ENCODE measurements at regions of chr4 and their contacts with region 1.

Region 1: DNA sequence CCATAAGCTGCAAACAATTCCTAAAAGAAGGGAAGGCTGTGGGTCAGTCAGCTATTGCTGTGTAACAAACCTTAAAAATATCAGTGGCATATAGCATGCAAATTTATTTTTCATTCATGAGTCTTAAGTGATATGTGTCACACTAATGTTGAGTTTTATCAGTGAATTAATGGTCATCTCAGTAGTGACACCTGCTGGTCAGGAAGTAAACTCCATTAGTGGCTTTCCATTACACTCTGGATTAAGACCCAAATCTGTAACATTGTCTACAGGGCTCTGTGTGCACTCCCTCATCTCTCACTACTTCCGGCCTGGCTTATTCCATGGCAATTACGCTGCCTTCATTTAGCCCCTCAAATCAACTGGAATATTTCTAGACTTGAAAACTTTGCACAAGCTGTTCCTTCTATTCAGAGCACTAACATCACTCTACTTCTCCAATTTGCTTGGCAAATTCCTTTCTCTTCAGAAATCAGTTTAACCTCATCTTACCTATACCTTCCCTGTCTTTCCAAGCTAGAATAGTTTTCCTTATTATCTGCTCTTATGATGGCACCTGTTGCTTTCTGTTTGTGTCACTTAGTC is 217.3 kb upstream of the TAPT1 start:
- DNase-seq: peak; percentile 47
- H3K4me3 ChIP-seq: no peak overlapping the region
- H3K27ac ChIP-seq: no peak overlapping the region
- H3K4me1 ChIP-seq: no peaks in the 10 kb centered on the region
- H3K27me3 ChIP-seq: peaks cover 9 to 10% of the 10 kb centered on the region in 2 experiments
- CTCF ChIP-seq: peak; percentile 56 to 63
- POLR2A ChIP-seq: no peak

Region 2: GRCh38 chr4:16289897-16290554 is 153.6 kb before region 1 on chr4:
- CTCF ChIA-PET with region 1: interaction called, 39 read pairs
- POLR2A ChIA-PET with region 1: no interaction called
- dilution Hi-C with region 1: no loop called
- intact Hi-C with region 1: loop called (anchors 1 kb)
- DNase-seq: peak; percentile 69
- H3K4me3 ChIP-seq: no peak overlapping the region
- H3K27ac ChIP-seq: no peak overlapping the region
- H3K4me1 ChIP-seq: no peaks in the 10 kb centered on the region
- H3K27me3 ChIP-seq: peaks cover 12 to 18% of the 10 kb centered on the region in 2 experiments
- CTCF ChIP-seq: peak; percentile 27 to 41
- POLR2A ChIP-seq: no peak

Region 3: DNA sequence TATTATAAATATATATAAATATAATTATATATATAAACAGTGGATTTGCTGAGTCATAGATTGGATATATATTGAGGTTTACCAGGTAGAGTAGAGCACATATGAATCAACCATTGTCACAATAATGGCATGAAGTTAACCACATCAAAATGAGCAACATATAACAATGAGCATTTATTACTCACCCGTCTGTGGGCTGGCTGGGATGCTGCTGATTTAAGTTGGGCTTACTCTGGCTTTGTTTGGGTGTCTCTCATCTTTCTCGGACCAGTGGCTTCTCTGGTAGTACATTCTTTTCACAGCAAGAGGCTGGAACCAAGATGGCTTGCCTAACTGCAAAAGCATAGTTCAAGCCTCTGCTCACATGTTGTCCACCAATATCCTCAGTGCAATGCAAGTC is 105.7 kb before region 1 on chr4:
- CTCF ChIA-PET with region 1: no interaction called
- POLR2A ChIA-PET with region 1: no interaction called
- dilution Hi-C with region 1: no loop called
- intact Hi-C with region 1: loop called (anchors 2 kb)
- DNase-seq: no peak
- H3K4me3 ChIP-seq: no peak overlapping the region
- H3K27ac ChIP-seq: no peak overlapping the region
- H3K4me1 ChIP-seq: no peaks in the 10 kb centered on the region
- H3K27me3 ChIP-seq: no peaks in the 10 kb centered on the region
- CTCF ChIP-seq: no peak
- POLR2A ChIP-seq: no peak

Region 4: GRCh38 chr4:16496501-16496900 is 52.9 kb after region 1 on chr4:
- CTCF ChIA-PET with region 1: no interaction called
- POLR2A ChIA-PET with region 1: no interaction called
- dilution Hi-C with region 1: no loop called
- intact Hi-C with region 1: no loop called
- DNase-seq: peak; percentile 54
- H3K4me3 ChIP-seq: no peak overlapping the region
- H3K27ac ChIP-seq: no peak overlapping the region
- H3K4me1 ChIP-seq: no peaks in the 10 kb centered on the region
- H3K27me3 ChIP-seq: no peaks in the 10 kb centered on the region
- CTCF ChIP-seq: no peak
- POLR2A ChIP-seq: no peak

Region 5: DNA sequence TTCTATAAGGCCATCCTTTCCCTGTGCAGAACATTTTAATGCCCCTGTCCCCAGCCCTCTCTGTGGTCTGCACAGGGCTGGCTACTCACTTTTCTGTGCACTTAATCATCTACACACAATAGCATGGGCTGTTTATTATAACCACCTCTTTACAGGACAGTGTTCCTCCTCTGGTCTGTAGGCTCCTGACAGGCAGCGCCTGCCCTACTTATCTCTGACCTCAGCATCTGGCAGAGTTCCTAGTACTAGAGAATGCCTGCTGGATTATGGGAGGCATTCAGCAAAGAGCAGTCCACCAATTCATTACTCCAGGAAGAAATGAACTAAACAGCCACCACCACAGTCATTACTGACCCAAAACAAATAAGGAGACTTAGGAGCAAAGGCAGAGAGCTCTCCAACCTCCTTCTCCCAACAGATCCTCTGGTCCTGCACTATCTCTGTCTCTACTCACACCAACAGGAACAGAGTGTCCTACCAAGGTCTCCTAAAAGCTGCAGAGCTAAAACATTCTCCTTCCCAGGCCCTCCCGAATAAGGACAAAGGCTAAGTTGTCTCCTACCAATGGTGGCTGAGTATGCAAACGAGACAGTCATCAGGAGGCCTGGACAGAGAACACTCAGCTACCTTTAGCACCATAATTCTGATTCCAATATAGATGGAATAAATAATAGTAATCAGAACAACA is 789.1 kb after region 1 on chr4:
- CTCF ChIA-PET with region 1: no interaction called
- POLR2A ChIA-PET with region 1: no interaction called
- dilution Hi-C with region 1: no loop called
- intact Hi-C with region 1: no loop called
- DNase-seq: peak; percentile 39
- H3K4me3 ChIP-seq: no peak overlapping the region
- H3K27ac ChIP-seq: no peak overlapping the region
- H3K4me1 ChIP-seq: no peaks in the 10 kb centered on the region
- H3K27me3 ChIP-seq: no peaks in the 10 kb centered on the region
- CTCF ChIP-seq: no peak
- POLR2A ChIP-seq: no peak